Left lung (tissue), 14 donors: ENCODE measurements at regions of chr9 and their contacts with region 1.

Region 1: GRCh38 chr9:135085830-135086546 is 1.5 kb upstream of the OLFM1 start:
- DNase-seq: peak; percentile 78 to 89 (median 82)
- ATAC-seq: peak; percentile 92
- H3K4me3 ChIP-seq: peak overlapping the region; percentile 10 to 21
- H3K27ac ChIP-seq: no peak overlapping the region
- H3K4me1 ChIP-seq: peaks cover 0 to 22% of the 10 kb centered on the region in 2 donors
- H3K27me3 ChIP-seq: peaks cover 27 to 83% of the 10 kb centered on the region in 2 donors
- CTCF ChIP-seq: peak; percentile 85 to 92

Region 2: DNA sequence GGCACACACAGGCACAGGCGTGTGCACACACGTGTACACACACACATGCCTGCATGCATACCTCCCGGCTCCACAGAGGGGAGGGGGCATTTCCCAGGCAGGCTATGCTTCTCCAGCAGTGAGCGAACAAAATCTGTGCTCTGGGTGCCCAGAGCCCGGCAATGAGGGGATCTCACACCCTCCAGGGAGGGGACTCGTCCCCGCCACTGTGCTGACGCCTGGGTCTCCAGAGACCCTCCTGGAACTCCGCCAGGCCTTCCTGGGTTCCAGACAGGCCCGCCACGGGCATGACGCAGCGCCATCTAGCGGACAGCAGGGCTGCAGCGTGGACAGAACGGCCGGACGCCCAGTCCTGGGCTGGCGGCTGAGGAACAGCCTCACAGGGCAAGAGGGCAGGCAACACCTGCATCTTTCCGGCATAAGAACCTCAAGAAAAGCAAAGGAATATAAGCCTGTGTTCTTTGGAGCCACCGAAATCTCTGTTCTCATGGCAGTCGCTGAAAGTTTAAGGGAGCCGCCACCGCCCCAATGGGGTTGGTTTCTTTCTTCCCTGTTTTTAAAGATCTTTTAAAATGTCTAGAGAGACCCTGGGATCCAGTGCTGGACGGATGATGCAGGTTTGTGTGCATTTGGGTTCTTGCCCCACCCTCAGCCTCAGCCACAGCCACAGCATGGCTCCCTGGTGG is 258.0 kb after region 1 on chr9:
- intact Hi-C with region 1: loop called in 1 of 2 experiments (anchors 2 kb)
- DNase-seq: peak; percentile 48 to 90 (median 58)
- ATAC-seq: peak; percentile 87
- H3K4me3 ChIP-seq: no peak overlapping the region
- H3K27ac ChIP-seq: no peak overlapping the region
- H3K4me1 ChIP-seq: no peaks in the 10 kb centered on the region
- H3K27me3 ChIP-seq: peaks cover 0 to 63% of the 10 kb centered on the region in 2 donors
- CTCF ChIP-seq: peak; percentile 79 to 91

Region 3: GRCh38 chr9:135410831-135411473 is 325.0 kb after region 1 on chr9:
- intact Hi-C with region 1: loop called in 1 of 2 experiments (anchors 5 kb)
- DNase-seq: no peak
- ATAC-seq: no peak
- H3K4me3 ChIP-seq: no peak overlapping the region
- H3K27ac ChIP-seq: no peak overlapping the region
- H3K4me1 ChIP-seq: no peaks in the 10 kb centered on the region
- H3K27me3 ChIP-seq: peaks cover 0 to 43% of the 10 kb centered on the region in 2 donors
- CTCF ChIP-seq: no peak

Region 4: GRCh38 chr9:135504262-135505229 is 418.6 kb after region 1 on chr9:
- intact Hi-C with region 1: no loop called
- DNase-seq: peak in 2 of 4 donors; percentile 48 to 85
- ATAC-seq: no peak
- H3K4me3 ChIP-seq: no peak overlapping the region
- H3K27ac ChIP-seq: no peak overlapping the region
- H3K4me1 ChIP-seq: peaks cover 7 to 25% of the 10 kb centered on the region in 2 donors
- H3K27me3 ChIP-seq: no peaks in the 10 kb centered on the region
- CTCF ChIP-seq: peak; percentile 64 to 65